Left lung (tissue), 14 donors: ENCODE measurements at regions of chr12 and their contacts with region 1.

Region 1: GRCh38 chr12:49232940-49233841 is 31.7 kb upstream of the TUBA1C start:
- DNase-seq: peak; percentile 49 to 80 (median 60)
- ATAC-seq: no peak
- H3K4me3 ChIP-seq: peak overlapping the region in 1 of 2 donors; percentile 60
- H3K27ac ChIP-seq: peak overlapping the region; percentile 98 to 99
- H3K4me1 ChIP-seq: peaks cover 13 to 52% of the 10 kb centered on the region in 2 donors
- H3K27me3 ChIP-seq: no peaks in the 10 kb centered on the region
- CTCF ChIP-seq: no peak

Region 2: GRCh38 chr12:49088190-49088931 is 144.8 kb before region 1 on chr12:
- intact Hi-C with region 1: loop called in 1 of 2 experiments (anchors 10 kb)
- DNase-seq: peak; percentile 77 to 91 (median 84)
- ATAC-seq: peak; percentile 97
- H3K4me3 ChIP-seq: no peak overlapping the region
- H3K27ac ChIP-seq: no peak overlapping the region
- H3K4me1 ChIP-seq: peaks cover 13 to 56% of the 10 kb centered on the region in 2 donors
- H3K27me3 ChIP-seq: peaks cover 44 to 52% of the 10 kb centered on the region in 2 donors
- CTCF ChIP-seq: peak; percentile 91 to 93

Region 3: GRCh38 chr12:49130151-49131050 is 102.8 kb before region 1 on chr12:
- intact Hi-C with region 1: loop called in 1 of 2 experiments (anchors 5 kb)
- DNase-seq: peak; percentile 87 to 98 (median 96)
- ATAC-seq: peak; percentile 84
- H3K4me3 ChIP-seq: peak overlapping the region; percentile 86 to 97
- H3K27ac ChIP-seq: peak overlapping the region; percentile 100
- H3K4me1 ChIP-seq: peaks cover 18 to 37% of the 10 kb centered on the region in 2 donors
- H3K27me3 ChIP-seq: no peaks in the 10 kb centered on the region
- CTCF ChIP-seq: peak; percentile 86 to 92

Region 4: DNA sequence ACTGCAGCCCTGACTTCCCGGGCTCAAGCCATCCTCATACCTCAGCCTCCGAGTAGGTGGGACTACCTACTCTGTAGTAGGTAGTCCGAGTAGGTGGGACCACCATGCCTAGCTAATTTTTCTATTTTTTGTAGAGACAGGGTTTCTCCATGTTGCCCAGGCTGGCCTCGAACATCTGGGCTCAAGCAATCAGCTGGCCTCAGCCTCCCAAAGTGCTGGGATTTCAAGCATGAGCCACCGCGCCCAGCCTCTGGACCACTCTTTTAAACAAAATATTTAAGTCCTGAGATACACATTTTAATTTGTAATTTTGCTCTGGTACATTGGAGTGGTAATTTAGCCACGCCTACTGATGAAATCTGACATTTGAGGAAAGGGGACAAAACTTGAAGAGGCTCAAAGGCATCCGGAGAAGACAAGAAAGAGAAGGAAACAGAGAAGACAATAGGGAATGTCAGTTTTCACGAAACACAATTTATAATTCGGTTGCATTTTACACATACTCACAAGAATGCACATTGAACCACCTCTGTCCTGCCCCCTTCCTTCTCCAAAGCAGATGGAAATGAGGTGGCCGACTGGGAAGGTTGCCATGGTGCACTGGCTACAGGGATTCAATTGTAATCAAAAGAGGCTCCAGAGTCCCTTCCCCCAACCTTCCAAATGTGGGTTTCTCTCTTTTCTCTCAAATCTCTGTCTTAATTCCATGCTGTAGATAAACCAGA is 34.6 kb before region 1 on chr12:
- intact Hi-C with region 1: loop called in 1 of 2 experiments (anchors 5 kb)
- DNase-seq: peak in 1 of 4 donors; percentile 55
- ATAC-seq: no peak
- H3K4me3 ChIP-seq: no peak overlapping the region
- H3K27ac ChIP-seq: peak overlapping the region; percentile 3 to 20
- H3K4me1 ChIP-seq: peaks cover 5 to 52% of the 10 kb centered on the region in 2 donors
- H3K27me3 ChIP-seq: no peaks in the 10 kb centered on the region
- CTCF ChIP-seq: no peak

Region 5: DNA sequence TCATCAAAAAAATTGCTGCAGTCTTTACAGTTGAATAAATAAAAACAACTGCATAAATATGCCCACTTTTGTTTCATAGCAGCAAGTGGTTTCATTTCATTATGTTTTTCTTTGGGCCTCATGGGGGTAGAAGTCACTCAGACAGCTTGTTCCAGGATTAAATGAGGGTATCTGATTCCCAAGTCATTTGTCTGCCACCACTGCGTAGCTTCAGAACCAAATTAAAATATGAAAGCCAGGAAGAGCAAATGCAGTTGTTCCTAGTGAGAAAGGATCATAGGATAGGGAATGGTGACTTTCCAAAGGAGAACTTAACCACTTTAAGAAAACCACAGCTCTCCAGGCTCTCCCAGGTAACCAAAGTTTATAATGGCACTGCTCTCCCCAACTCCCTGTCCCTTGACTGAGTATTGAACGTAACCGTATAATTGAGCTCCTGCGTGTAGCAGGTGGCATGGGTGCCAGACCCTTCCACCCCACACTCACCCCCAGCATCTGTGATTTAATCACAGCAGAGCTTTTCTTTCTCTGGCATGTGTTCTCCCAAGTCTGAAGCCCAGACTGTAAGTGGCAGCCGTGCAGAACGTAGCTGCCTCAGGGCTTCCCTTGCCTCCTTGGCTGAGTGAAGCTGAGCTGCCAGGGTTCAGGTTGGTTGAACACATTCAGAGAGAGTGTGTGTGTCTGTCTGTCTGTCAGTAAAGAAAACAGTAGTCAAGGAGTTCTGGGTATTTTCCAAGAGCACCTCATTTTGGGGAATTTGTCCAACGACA is 294.4 kb after region 1 on chr12:
- intact Hi-C with region 1: no loop called
- DNase-seq: no peak
- ATAC-seq: no peak
- H3K4me3 ChIP-seq: no peak overlapping the region
- H3K27ac ChIP-seq: no peak overlapping the region
- H3K4me1 ChIP-seq: no peaks in the 10 kb centered on the region
- H3K27me3 ChIP-seq: no peaks in the 10 kb centered on the region
- CTCF ChIP-seq: no peak